ENCODE measurements at regions of chr12 and their contacts with region 1.

Region 1: GRCh38 chr12:8860165-8860961 is 37.9 kb downstream of the A2ML1 start:
- DNase-seq: peak; percentile 58
- CTCF ChIP-seq: peak; percentile 63

Region 2: DNA sequence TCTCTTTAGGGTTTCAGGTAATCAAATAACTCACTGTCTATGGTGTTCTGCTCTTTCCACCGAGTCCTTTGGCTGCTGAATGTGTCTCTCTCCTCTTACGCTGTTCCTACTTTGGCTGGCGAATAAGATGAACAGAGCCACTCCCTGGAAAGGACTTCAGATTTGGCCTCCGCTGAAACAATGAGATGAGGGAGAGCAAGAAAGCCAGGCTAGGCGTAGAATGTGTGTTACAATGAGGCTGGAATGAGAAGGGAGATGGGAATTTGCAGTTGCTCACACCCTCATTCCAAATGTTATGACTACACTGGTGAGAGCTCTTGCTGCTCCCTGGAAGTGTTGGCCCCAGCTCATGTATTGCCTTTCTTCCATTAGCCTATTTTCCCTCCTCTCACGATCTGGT is 197.8 kb before region 1 on chr12 and contains the start of gene MFAP5:
- CTCF ChIA-PET with region 1: interaction called, 37 read pairs
- POLR2A ChIA-PET with region 1: no interaction called
- DNase-seq: no peak
- CTCF ChIP-seq: no peak

Region 3: DNA sequence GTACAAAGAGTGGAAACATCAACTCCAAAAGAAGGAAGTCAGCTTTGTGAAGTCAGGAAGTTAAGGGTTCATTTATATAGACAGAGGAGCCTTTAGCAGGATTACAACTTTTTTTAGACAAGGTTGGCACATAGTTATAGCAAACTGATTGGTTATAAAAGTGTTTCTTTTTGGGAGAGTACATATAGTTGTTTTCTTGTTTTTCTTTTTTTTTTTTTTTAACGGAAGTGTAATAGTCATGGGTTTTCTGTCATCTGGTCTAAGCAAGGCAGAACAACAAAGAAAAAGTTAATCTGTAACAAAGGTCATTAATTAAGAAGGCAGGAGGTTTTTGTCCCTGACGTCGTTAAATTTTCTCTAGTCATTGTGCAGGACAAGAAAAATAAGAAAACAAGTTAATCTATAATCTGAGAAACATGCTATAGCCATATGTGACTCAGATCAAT is 184.7 kb before region 1 on chr12:
- CTCF ChIA-PET with region 1: interaction called, 27 read pairs
- POLR2A ChIA-PET with region 1: no interaction called
- DNase-seq: no peak
- CTCF ChIP-seq: no peak

Region 4: GRCh38 chr12:8681041-8681902 is 179.1 kb before region 1 on chr12:
- CTCF ChIA-PET with region 1: interaction called, 27 read pairs
- POLR2A ChIA-PET with region 1: no interaction called
- DNase-seq: no peak
- CTCF ChIP-seq: no peak

Region 5: GRCh38 chr12:8849876-8850275 is 10.5 kb before region 1 on chr12:
- CTCF ChIA-PET with region 1: interaction called, 12 read pairs
- POLR2A ChIA-PET with region 1: no interaction called
- DNase-seq: no peak
- CTCF ChIP-seq: no peak

Region 6: DNA sequence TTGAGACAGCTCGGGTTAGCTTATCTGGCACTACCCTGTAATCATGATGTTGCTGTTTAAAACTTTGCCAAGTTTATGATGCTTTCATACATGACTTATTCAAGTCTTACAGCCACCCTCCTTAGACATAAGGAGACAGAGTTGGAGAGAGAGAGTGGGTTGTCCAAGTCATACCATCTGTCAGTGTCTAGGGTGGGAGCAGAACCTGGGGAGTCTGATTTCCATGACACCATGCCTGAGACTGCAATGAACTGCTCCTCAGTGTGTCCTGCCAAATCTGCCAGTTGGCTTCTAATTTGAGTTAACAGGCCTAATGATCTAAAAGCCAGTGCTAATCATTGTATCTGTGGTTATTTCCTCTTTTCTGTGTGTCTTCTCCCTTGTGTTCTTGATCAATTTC is 10.2 kb after region 1 on chr12:
- CTCF ChIA-PET with region 1: interaction called, 23 read pairs
- POLR2A ChIA-PET with region 1: no interaction called
- DNase-seq: no peak
- CTCF ChIP-seq: no peak

Region 7: GRCh38 chr12:8876887-8877286 is 16.5 kb after region 1 on chr12:
- CTCF ChIA-PET with region 1: interaction called, 23 read pairs
- POLR2A ChIA-PET with region 1: no interaction called
- DNase-seq: no peak
- CTCF ChIP-seq: no peak

Region 8: GRCh38 chr12:8905546-8905945 is 45.2 kb after region 1 on chr12:
- CTCF ChIA-PET with region 1: no interaction called
- POLR2A ChIA-PET with region 1: no interaction called
- DNase-seq: no peak
- CTCF ChIP-seq: no peak